Endothelial cell of umbilical vein (primary cell): ENCODE measurements at regions of chr11 and their contacts with region 1.

Region 1: DNA sequence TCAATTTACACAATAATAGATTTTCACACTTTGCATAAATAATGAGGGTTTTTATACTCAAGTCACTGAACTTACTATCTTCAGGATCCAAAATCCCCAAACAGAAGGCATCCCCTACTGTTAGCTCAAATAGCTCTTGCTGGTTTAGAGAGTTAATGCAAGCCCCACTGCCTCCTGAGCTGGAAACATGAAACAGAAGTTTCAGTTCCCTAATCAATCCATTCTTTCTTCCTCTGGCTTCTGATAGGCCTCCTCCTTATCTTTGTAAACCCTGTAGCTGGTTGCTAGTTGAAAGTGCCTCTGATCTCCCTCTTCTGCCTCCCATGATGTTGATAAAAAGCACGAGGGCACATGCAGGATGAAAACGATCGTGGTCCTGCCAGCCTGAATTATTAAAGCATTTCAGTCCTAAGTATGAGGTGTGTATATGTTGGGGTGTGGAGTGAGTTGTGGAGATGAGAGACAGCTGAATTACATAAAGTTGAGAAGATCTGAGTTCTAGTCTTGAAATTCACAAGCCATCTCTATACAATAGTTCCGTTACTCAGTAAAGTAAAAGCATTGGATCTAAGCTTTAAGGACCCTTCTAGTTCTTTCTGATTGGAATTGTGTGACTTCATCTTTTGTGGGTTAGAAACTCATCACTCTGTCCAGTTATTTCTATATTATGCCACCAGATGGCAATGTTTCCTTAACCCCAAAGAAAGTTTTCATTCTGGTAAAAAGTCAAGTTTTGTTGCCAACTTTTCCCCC is 35.0 kb upstream of the EHF start:
- DNase-seq: peak; percentile 55
- H3K4me3 ChIP-seq: no peak overlapping the region
- H3K27ac ChIP-seq: no peak overlapping the region
- H3K4me1 ChIP-seq: no peaks in the 10 kb centered on the region
- H3K27me3 ChIP-seq: peaks cover 5 to 11% of the 10 kb centered on the region in 2 experiments
- CTCF ChIP-seq: peak; percentile 36 to 38
- POLR2A ChIP-seq: no peak

Region 2: GRCh38 chr11:34512840-34513681 is 72.8 kb before region 1 on chr11:
- CTCF ChIA-PET with region 1: interaction called, 12 read pairs
- POLR2A ChIA-PET with region 1: no interaction called
- dilution Hi-C with region 1: no loop called
- intact Hi-C with region 1: no loop called
- DNase-seq: peak; percentile 49
- H3K4me3 ChIP-seq: no peak overlapping the region
- H3K27ac ChIP-seq: no peak overlapping the region
- H3K4me1 ChIP-seq: no peaks in the 10 kb centered on the region
- H3K27me3 ChIP-seq: no peaks in the 10 kb centered on the region
- CTCF ChIP-seq: peak; percentile 86 to 92
- POLR2A ChIP-seq: no peak

Region 3: DNA sequence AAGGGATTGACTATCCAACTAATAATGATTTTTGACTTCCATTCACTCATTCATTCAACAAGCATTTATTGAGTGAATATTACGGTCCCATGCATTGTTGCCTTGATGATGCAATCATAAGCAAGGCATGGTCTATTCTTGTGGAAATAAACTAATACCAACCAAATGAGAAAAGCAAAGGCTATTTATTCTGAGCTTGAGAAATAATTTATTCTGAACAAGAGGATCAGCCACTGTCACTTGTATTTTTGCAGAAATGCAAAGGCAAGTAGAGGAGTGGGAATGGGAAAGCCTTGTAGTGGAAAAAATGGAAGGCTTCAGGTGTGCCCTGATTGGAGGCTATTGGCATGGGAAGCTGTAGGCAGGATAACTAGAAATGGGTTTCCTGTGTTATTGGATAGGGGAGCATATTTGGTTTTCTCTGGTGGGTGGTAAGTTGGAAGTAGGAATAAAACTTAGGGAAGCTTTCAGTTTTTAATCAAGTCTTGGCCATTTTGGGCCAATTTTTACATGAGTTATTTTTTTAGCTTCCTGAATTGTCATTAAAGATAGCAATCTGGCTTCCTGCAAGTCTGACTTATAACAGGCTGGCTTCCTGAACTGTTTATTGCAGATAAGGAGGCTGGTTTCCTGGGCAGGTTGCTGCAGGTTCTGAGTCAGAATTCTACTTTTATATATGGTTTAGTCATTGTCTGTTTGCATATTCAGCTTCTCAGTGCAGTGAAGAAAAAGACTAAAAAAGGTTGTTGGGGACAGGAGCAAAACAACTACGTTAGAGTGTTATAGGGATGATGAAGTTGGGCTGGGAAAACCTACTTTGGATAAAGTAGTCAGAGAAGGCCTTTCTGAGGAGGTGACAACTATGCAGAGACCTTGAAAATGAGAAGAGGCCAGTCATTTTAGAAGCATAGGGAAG is 223.5 kb after region 1 on chr11:
- CTCF ChIA-PET with region 1: interaction called, 7 read pairs
- POLR2A ChIA-PET with region 1: no interaction called
- dilution Hi-C with region 1: no loop called
- intact Hi-C with region 1: loop called (anchors 1 kb)
- DNase-seq: peak; percentile 98
- H3K4me3 ChIP-seq: no peak overlapping the region
- H3K27ac ChIP-seq: peak overlapping the region; percentile 80
- H3K4me1 ChIP-seq: peaks cover 24% of the 10 kb centered on the region
- H3K27me3 ChIP-seq: no peaks in the 10 kb centered on the region
- CTCF ChIP-seq: no peak
- POLR2A ChIP-seq: peak; percentile 91

Region 4: GRCh38 chr11:34899633-34900016 is 313.7 kb after region 1 on chr11:
- CTCF ChIA-PET with region 1: interaction called, 21 read pairs
- POLR2A ChIA-PET with region 1: no interaction called
- dilution Hi-C with region 1: no loop called
- intact Hi-C with region 1: no loop called
- DNase-seq: no peak
- H3K4me3 ChIP-seq: no peak overlapping the region
- H3K27ac ChIP-seq: no peak overlapping the region
- H3K4me1 ChIP-seq: no peaks in the 10 kb centered on the region
- H3K27me3 ChIP-seq: no peaks in the 10 kb centered on the region
- CTCF ChIP-seq: no peak
- POLR2A ChIP-seq: no peak

Region 5: DNA sequence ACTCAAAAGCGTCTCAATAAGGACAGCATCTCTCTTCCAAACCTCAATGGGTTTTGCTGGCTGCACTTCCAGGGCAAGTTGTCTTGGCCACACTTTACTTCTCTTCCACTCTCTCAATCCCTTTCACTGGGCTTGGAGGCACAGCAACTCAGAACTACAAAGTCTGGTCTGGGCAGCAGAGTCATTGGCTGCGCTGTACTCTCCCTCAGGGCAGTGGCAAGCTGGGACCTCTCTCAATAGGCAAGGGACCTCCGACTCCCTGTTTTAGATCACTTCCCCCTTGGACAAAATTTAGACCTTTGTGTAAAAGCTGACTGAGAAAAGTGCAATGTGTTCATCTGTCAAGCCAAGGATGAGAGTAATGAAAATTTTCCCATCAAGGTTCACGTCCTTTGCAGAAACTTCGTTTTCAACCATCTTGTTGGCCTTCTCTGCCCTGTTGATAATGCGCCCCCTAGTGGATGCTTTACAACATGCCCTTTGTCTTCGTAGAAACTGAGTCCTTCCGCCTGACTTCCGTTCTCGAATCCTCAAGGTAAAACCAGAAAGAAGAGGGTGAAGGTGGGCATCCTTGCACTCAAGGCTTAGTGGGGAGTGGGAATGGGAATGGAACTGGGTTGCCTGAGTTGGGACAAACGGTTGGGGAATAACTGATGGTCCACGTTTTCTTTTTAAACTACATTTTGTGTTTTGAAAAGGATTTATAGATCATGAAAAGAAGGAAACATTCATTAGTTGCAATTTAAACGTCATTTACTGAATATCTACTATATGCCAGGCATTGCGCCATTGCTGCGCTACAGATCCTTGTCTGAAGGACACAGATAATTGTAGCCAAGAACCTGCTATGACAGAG is 652.2 kb after region 1 on chr11:
- CTCF ChIA-PET with region 1: no interaction called
- POLR2A ChIA-PET with region 1: no interaction called
- dilution Hi-C with region 1: no loop called
- intact Hi-C with region 1: loop called (anchors 10 kb)
- DNase-seq: peak; percentile 70
- H3K4me3 ChIP-seq: no peak overlapping the region
- H3K27ac ChIP-seq: no peak overlapping the region
- H3K4me1 ChIP-seq: no peaks in the 10 kb centered on the region
- H3K27me3 ChIP-seq: peaks cover 5 to 21% of the 10 kb centered on the region in 2 experiments
- CTCF ChIP-seq: peak; percentile 78 to 81
- POLR2A ChIP-seq: no peak

Region 6: DNA sequence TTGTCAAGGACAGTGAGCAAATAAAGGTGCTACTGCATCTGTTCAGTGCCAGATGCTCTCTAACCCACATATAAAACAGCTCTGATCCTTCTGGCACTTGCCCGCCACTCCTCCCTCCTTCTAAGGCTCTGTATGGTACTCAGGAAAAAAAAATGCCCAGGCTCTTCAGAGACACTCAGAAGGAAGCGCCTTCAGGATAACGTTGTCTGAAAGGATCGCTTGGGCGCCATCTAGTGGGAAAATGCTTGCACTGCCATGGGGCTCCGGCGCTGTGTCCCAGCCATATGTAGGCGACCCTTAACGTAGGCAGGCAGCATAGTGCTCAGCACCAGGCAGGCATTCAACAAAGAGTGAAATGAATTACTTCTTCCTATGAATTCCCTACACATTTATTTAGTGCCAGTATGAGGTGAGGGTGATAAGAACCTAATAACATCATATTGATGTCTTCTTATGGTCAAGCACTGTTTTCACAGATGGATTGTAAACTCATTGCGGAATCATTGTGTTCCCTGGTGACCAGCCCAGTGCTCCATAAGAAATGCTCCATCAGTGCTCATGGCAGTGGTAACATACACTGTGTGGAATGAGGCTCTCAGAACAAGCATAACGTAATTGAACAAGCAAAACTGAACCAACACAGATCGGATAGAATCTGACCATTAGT is 899.9 kb after region 1 on chr11:
- CTCF ChIA-PET with region 1: interaction called, 11 read pairs
- POLR2A ChIA-PET with region 1: no interaction called
- dilution Hi-C with region 1: no loop called
- intact Hi-C with region 1: no loop called
- DNase-seq: peak; percentile 79
- H3K4me3 ChIP-seq: no peak overlapping the region
- H3K27ac ChIP-seq: no peak overlapping the region
- H3K4me1 ChIP-seq: no peaks in the 10 kb centered on the region
- H3K27me3 ChIP-seq: peaks cover 8 to 10% of the 10 kb centered on the region in 2 experiments
- CTCF ChIP-seq: peak; percentile 85 to 92
- POLR2A ChIP-seq: no peak